Left ventricle myocardium superior (tissue), 1 donor: ENCODE measurements at regions of chr20 and their contacts with region 1.

Region 1: DNA sequence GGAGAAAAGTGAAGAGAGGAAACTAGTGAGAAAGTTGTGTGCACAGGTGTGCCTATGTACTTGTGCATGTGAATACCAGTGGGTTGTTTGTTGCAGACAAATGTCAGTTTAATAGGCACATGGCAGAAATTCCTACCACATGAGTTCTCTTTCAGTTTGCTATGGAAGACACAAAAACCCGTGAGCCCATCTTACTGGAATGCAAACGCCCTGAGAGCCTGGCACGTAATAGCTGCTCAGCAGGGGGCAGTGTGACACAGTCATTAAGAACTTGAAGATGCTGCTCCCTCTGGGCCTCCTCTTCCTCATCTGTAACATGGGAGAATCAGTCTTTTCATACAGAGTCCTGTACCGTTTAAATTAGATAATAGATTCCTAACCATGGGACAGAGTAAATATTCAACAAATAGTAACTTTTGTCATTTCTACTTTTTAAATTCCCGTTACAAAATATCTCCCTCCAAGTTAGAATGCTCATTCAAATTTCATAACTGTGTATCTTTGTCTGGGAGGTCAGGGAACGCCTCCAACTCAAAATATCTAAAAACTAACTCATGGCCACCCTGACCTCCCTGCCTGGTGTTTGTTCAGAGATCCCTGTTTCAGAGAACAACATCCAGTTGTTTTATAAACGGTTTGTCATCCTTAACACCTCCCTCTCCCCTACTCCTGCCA is 802.9 kb downstream of the MAFB start:
- DNase-seq: peak; percentile 75
- ATAC-seq: peak; percentile 90

Region 2: GRCh38 chr20:39829256-39829655 is 56.9 kb before region 1 on chr20:
- intact Hi-C with region 1: no loop called
- DNase-seq: peak; percentile 51
- ATAC-seq: peak; percentile 29

Region 3: DNA sequence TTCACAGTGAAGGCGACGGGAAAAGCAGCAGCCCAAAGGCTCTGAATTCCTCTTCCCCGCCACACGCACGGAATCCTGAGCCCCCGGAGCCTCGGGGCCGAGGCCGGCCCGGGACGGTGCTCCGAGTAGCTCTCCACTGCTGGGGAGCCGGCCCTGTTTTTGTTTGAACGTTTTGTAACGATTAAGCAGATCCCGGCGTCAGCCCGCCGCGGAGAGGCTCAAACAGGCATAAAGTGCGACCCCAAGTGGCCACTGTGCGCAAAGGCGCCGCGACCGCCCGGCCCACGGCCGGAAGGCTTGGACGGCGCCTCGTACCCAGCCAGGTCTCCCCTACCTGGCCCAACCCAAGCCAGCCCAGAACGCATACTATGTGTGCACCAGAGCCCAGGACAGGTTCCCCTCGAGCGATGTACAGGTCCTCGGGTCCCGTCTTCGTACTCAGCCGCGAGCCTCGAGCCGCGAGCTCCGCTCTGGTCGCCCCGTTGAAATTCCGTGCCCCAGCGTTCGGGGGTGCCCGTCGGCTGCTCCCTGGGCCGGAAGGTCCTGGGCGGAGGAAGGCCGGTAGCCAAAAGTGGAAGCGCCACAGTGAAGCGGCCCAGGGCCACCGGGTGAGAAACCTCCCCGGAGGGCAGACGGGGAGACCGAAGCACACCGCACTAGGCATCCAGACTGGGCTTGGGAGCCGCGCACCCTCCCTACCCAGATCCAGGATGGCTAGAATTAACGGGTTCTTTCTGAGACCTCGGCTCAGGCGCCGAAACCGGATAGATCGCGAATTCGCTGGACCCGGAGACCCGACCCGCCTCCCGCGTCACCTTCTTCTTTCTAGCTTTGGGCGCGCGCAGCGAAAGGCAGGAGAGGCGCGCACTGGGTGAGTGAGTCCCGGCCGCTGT is 804.1 kb after region 1 on chr20:
- intact Hi-C with region 1: loop called (anchors 10 kb)
- DNase-seq: peak; percentile 96
- ATAC-seq: peak; percentile 61